H1 (cell line): ENCODE measurements at regions of chr7 and their contacts with region 1.

Region 1: DNA sequence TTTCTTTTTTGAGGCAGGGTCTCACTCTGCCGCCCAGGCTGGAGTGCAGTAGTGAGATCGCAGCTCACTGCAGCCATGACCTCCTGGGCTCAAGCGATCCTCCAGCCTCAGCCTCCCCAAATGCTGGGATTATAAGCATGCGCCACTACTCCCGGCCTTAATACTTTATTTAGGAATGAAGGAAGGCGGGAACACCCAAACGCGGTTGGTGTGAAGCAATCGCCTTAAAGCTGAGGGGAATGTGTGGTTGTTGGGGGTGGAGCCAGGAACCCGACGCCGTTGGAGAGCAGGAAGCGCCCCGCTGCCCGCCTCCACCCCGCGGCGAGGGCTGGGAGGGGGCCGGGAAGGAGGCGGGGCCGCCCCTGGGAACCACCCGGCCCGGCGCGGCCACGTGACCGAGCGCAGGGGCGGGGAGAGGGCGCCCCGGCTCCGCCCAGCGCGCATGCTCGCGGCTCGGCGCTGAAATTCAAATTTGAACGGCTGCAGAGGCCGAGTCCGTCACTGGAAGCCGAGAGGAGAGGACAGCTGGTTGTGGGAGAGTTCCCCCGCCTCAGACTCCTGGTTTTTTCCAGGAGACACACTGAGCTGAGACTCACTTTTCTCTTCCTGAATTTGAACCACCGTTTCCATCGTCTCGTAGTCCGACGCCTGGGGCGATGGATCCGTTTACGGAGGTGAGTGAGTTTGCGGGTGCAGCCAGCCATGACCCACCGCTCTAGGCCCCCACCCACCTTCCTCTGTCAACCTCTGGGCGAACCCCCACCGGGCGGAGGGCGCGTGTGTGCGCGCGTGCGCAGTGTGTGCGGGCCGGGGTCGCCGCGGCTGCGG is at the start of gene ANLN:
- DNase-seq: peak; percentile 80 to 91
- H3K4me3 ChIP-seq: peak within 1 kb of the TSS; percentile 87 to 94 (median 93)
- H3K27ac ChIP-seq: peak within 1 kb of the TSS; percentile 80
- H3K4me1 ChIP-seq: peaks cover 10 to 15% (median 13%) of the 10 kb centered on the region in 4 experiments
- H3K27me3 ChIP-seq: no peaks in the 10 kb centered on the region
- CTCF ChIP-seq: no peak
- EP300 ChIP-seq: no peak
- POLR2A ChIP-seq: peak in 1 of 2 experiments; percentile 86; a peak in 2 of 3 replicates
- RAD21 ChIP-seq: no peak
- total RNA-seq, gene ANLN: 87.4 and 90.1 TPM in 2 replicates

Region 2: GRCh38 chr7:36366718-36367560 is 22.6 kb before region 1 on chr7:
- CTCF ChIA-PET with region 1: interaction called, 27 read pairs
- POLR2A ChIA-PET with region 1: interaction called, 5 read pairs
- DNase-seq: peak; percentile 67 to 95
- H3K4me3 ChIP-seq: peak overlapping the region; percentile 60 to 79 (median 76)
- H3K27ac ChIP-seq: no peak overlapping the region
- H3K4me1 ChIP-seq: no peaks in the 10 kb centered on the region
- H3K27me3 ChIP-seq: peaks cover 28 to 59% (median 46%) of the 10 kb centered on the region in 4 experiments
- CTCF ChIP-seq: peak; percentile 81 to 91 (median 82)
- EP300 ChIP-seq: no peak
- POLR2A ChIP-seq: no peak
- RAD21 ChIP-seq: peak; percentile 39 to 50; a peak in 3 of 4 replicates

Region 3: DNA sequence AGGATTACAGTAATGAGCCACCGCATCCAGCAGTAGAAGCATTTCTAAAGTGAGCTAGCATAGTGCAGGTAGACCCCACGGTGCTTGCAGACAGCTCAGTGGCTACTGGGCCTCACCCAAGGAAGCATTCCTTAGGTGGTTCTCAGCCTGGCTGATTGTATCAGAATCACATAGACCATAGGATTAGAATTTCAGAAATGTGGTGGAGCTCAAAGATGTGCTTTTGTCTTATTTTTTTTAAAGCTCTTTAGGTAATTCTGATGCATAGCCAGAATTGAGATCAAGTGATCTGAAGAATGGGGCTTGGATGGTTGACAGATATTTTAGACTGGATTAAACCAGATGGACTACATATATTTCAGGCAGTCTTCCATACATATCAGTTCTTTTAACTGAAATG is 11.0 kb after region 1 on chr7:
- CTCF ChIA-PET with region 1: no interaction called
- POLR2A ChIA-PET with region 1: interaction called, 16 read pairs
- DNase-seq: no peak
- H3K4me3 ChIP-seq: no peak overlapping the region
- H3K27ac ChIP-seq: no peak overlapping the region
- H3K4me1 ChIP-seq: no peaks in the 10 kb centered on the region; a peak in 2 of 7 replicates
- H3K27me3 ChIP-seq: no peaks in the 10 kb centered on the region
- CTCF ChIP-seq: no peak
- EP300 ChIP-seq: no peak
- POLR2A ChIP-seq: no peak
- RAD21 ChIP-seq: no peak